Left colon (tissue), 2 donors: ENCODE measurements at regions of chr19 and their contacts with region 1.

Region 1: DNA sequence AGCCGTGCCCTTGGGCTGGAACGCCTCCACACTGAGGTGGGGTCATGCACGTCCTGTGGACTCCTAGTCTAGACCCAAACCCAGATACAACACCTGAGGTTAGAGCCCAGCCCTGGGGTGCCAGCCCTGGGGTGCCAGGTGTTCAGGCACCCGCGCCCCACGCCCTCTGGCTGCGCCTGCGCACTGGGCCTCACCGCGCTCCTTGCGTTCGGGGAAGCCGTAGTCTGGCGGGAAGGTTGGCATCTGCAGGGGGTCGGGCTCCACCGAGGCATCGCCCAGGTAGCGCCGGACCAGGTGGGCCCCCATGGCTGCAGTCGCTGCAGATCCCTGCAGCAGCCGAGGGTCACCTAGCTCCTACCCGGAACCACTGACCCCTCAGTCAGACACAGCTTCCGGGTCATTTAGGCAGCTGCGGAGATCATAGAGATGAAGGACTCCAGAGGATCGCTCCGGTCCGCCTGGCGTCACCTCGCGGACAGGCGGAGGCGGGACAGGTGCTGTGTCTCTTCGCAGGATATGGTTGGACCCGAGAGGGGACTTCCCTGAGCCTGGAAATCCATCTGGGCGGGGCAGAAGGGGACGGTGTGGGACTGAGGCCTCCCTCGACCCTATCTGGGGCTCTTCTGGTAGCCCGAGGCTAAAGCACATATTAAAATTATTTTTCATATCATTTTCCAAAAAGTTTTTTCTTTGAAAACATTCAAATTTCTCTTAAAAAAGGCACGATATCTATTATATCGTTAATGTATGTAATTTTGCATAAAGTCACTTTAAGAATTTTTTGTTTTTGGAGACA is at the start of gene NDUFB7:
- DNase-seq: peak; percentile 90 to 93
- ATAC-seq: peak; percentile 91
- total RNA-seq, gene NDUFB7: 228 to 299 TPM

Region 2: GRCh38 chr19:14689598-14690503 is 118.0 kb after region 1 on chr19 and contains the start of gene ZNF333:
- intact Hi-C with region 1: loop called in 1 of 2 experiments (anchors 5 kb)
- DNase-seq: peak; percentile 97 to 100
- ATAC-seq: peak; percentile 97
- total RNA-seq, gene ZNF333: 5.3 to 7.3 TPM